Kidney (tissue), 22 donors: ENCODE measurements at regions of chr17 and their contacts with region 1.

Region 1: GRCh38 chr17:49180303-49180702 is 30.1 kb downstream of the GNGT2 start:
- DNase-seq: peak in 4 of 5 donors; percentile 40 to 69 (median 50)
- H3K4me3 ChIP-seq: no peak overlapping the region
- H3K27ac ChIP-seq: no peak overlapping the region
- H3K4me1 ChIP-seq: no peaks in the 10 kb centered on the region
- H3K27me3 ChIP-seq: no peaks in the 10 kb centered on the region
- CTCF ChIP-seq: peak; percentile 73

Region 2: DNA sequence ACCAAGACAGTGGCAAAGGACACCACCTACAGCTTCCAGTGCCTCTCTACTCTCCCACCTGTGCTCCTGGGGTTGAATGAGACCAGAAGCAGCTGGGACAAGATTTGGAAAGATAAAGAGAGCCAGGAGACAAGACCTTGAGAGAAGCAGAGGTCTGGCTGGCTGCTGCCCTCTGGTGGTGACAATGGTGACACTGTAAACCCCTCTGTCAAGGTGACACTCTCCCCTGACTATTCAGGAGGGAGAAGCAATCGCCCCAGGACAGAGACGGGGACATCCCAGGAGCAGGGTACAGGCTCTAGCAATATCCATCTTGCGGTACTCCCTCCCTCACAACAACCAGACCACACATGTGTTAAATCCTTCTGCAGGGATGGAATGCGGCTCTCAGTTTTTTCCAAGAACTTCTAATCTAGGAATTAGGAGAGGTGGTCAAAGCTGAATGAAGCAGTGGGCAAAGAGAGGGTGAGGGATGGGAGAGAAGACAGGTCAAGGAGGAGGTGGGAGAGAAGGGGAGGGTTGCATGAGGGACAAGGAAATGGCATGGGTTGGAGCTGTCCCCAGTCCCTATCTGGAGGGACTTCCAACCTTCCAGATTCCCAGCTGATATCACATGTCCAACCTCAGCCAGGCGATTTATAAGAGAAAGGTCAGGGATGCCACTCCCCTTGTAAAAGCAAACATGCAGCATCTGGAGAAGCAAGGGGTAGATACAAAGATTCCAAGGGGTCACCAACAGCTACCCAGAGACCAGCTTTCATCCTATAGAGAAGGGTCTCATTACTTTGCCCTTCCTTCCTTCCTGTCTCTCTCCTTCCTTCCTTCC is 47.3 kb after region 1 on chr17:
- intact Hi-C with region 1: loop called (anchors 5 kb)
- DNase-seq: peak in 4 of 5 donors; percentile 74 to 85 (median 80)
- H3K4me3 ChIP-seq: no peak overlapping the region
- H3K27ac ChIP-seq: no peak overlapping the region
- H3K4me1 ChIP-seq: peaks cover 0 to 18% (median 6%) of the 10 kb centered on the region in 3 donors
- H3K27me3 ChIP-seq: peaks cover 23% of the 10 kb centered on the region
- CTCF ChIP-seq: peak; percentile 83

Region 3: DNA sequence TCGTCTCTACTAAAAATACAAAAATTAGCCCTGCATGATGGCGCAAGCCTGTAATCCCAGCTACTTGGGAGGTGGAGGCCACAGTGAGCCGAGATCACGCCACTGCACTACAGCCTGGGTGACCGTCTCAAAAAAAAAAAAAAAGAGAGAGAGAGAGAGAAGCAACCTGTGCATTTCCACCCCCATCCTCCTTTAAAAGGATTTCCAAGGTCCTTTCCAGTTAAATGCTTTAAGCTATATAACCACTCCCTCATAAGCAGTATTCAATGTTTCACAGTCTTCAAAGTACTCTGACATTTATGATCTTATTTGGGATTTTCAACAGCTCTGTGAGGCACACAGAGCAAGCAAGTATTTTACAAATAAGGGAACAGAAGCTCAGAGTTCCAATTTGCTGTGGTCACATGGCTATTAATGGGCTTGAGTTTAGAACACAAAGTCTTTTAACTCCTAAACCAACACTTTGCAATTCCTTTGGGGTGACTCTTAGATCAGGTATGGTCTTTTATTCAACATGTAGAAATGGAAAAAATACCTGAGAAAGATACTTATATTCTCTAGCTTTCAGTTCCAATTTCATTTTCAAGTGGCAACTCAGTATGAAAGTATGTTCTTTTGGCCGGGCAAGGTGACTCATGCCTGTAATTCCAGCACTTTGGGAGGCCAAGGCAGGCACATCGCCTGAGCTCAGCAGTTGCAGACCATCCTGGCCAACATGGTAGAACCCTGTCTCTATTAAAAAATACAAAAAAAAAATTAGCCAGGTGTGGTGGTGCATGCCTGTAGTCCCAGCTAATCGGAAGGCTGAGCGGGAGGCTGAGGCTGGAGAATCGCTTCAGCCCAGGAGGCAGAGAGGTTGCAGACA is 466.3 kb after region 1 on chr17:
- intact Hi-C with region 1: no loop called
- DNase-seq: no peak
- H3K4me3 ChIP-seq: no peak overlapping the region
- H3K27ac ChIP-seq: peak overlapping the region; percentile 11 to 45
- H3K4me1 ChIP-seq: peaks cover 2 to 11% (median 3%) of the 10 kb centered on the region in 3 donors
- H3K27me3 ChIP-seq: no peaks in the 10 kb centered on the region
- CTCF ChIP-seq: no peak